PC-3 (cell line): ENCODE measurements at regions of chrX and their contacts with region 1.

Region 1: GRCh38 chrX:2811271-2811670 is 17.5 kb upstream of the GYG2 start:
- DNase-seq: no peak
- ATAC-seq: no peak
- H3K4me3 ChIP-seq: no peak overlapping the region
- H3K27ac ChIP-seq: no peak overlapping the region
- H3K4me1 ChIP-seq: peaks cover 10% of the 10 kb centered on the region; the same call in 1 of the 2 replicates
- H3K27me3 ChIP-seq: no peaks in the 10 kb centered on the region
- CTCF ChIP-seq: no peak

Region 2: GRCh38 chrX:2640275-2641150 is 170.8 kb before region 1 on chrX:
- CTCF ChIA-PET with region 1: no interaction called
- POLR2A ChIA-PET with region 1: no interaction called
- intact Hi-C with region 1: loop called (anchors 1 kb)
- DNase-seq: no peak
- ATAC-seq: no peak
- H3K4me3 ChIP-seq: no peak overlapping the region
- H3K27ac ChIP-seq: no peak overlapping the region
- H3K4me1 ChIP-seq: no peaks in the 10 kb centered on the region
- H3K27me3 ChIP-seq: no peaks in the 10 kb centered on the region
- CTCF ChIP-seq: no peak

Region 3: DNA sequence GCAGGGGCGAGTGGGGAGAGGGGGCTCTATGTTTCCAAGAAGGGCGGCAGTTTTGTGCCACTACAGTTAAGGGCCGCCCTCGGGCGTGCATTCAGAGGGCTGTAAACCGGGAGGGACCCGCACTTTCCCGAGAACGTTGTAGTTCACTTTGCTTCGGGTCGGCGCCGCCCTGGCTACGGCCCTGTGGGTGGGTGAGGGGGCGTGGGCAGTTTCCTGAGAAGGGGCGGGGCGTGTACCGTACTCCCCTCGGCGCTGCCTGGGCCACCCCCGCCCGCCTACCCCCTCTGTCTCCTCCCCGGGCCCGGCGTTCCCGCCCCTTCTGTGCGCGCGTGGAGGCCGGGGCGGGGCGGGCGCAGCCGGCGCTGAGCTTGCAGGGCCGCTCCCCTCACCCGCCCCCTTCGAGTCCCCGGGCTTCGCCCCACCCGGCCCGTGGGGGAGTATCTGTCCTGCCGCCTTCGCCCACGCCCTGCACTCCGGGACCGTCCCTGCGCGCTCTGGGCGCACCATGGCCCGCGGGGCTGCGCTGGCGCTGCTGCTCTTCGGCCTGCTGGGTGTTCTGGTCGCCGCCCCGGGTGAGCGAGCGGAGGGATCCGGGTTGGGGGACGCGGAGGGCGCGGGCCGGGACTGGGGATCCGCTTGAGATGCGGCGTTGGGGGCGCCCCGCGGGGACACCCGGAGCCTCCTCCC is 120.3 kb before region 1 on chrX and contains the start of gene CD99:
- CTCF ChIA-PET with region 1: no interaction called
- POLR2A ChIA-PET with region 1: no interaction called
- intact Hi-C with region 1: loop called (anchors 1 kb)
- DNase-seq: peak; percentile 77
- ATAC-seq: peak; percentile 87
- H3K4me3 ChIP-seq: peak within 1 kb of the TSS; percentile 93
- H3K27ac ChIP-seq: peak within 1 kb of the TSS; percentile 58
- H3K4me1 ChIP-seq: peaks cover 8% of the 10 kb centered on the region
- H3K27me3 ChIP-seq: no peaks in the 10 kb centered on the region
- CTCF ChIP-seq: no peak
- total RNA-seq, gene CD99: 202 and 325 TPM in 2 replicates

Region 4: GRCh38 chrX:2781698-2782097 is 29.6 kb before region 1 on chrX:
- CTCF ChIA-PET with region 1: no interaction called
- POLR2A ChIA-PET with region 1: no interaction called
- intact Hi-C with region 1: no loop called
- DNase-seq: no peak
- ATAC-seq: no peak
- H3K4me3 ChIP-seq: no peak overlapping the region
- H3K27ac ChIP-seq: no peak overlapping the region
- H3K4me1 ChIP-seq: no peaks in the 10 kb centered on the region
- H3K27me3 ChIP-seq: no peaks in the 10 kb centered on the region
- CTCF ChIP-seq: no peak